Mammary epithelial cell (primary cell): ENCODE measurements at regions of chr14 and their contacts with region 1.

Region 1: DNA sequence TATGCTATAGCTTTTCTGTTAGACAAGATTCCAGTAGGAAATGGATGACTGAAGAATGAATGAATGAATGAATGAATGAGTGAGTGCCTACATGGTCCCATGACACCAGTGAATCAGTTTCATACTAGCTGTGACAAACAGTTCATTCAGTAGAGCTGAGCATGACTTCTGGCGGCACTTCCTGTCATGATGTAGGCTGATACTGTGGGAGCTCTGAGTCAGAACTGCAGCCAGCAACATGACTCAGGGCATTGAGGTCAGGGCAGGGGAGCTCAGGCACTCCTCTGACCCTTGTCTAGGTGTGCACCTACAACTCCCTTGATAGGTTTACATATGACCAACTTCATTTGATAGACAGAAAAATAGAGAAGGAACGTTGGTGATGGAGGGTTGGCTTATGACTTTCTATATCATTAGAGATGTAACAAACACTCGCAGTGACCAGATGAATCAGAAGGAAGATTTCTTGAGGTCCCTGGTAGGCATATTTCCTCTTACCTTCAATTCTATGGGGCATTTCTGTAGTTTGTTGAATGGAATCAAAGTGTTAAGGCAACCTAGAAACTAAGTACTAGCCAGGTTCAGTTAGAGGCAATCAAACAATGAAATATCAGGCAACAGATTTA is 139.3 kb upstream of the ARHGAP5 start:
- DNase-seq: peak; percentile 99
- H3K4me3 ChIP-seq: no peak overlapping the region
- H3K27ac ChIP-seq: peak overlapping the region; percentile 93
- H3K4me1 ChIP-seq: peaks cover 21% of the 10 kb centered on the region
- H3K27me3 ChIP-seq: no peaks in the 10 kb centered on the region
- CTCF ChIP-seq: no peak

Region 2: DNA sequence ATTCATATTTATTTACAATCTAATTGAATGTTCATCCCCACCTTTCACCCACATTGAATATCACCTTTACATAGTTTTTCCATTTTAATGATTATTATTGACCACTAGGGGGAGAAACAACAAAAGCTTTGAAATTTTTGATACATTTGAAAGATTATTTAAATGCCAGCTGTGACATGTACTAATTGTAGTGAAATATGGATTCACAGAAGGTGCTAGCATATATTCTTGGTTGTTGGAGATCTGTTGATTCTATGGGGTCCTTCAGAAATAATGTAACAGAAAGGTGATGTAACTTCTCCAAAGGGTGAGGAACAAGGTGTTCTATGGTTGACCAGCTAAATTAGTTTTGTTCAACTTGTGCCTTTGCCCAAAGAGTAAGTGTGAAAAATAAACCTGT is 427.6 kb before region 1 on chr14:
- CTCF ChIA-PET with region 1: no interaction called
- dilution Hi-C with region 1: no loop called
- in situ Hi-C with region 1: loop called in 1 of 2 experiments (anchors 25 kb)
- intact Hi-C with region 1: loop called (anchors 1 kb)
- DNase-seq: peak; percentile 20
- H3K4me3 ChIP-seq: no peak overlapping the region
- H3K27ac ChIP-seq: no peak overlapping the region
- H3K4me1 ChIP-seq: no peaks in the 10 kb centered on the region
- H3K27me3 ChIP-seq: no peaks in the 10 kb centered on the region
- CTCF ChIP-seq: peak; percentile 33 to 46

Region 3: DNA sequence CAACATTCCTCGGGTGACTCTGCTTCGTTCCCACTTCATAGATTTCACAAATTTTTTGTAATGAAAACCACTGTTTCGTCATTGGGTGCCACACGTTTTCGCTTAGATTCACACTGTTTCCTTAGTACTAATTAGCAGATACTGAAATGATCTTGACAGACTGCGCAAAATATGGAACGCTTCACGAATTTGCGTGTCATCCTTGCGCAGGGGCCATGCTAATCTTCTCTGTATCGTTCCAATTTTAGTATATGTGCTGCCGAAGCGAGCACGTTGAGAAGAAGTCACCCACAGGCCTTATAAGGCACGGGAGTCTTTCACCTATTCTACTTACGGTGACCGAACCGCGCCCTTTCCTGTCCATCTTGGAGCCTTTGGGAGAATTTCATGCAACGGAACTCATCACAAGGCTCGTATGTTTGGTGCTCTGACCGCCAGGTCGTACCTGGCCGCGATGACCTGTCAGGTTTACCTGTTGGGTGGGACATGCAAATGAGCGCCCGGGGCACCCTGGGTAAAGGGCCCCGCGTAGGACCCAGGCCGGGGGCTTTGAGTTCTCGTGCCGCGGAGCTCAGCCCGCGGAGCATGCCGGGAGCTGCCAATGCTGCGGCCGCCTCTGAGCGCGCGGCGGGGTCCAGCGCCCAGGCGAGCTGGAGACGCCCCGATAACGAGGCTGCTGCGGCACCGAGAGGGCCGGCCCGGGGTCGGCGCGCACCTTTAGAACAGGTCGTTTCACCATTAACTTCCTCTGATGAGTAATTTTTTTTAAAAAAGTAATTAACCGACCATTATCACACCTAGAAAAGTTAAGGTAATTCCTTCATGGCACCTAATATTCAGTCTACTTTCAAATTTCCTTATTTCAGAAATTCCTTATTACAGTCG is 265.4 kb after region 1 on chr14 and contains the start of gene RNU6-8:
- CTCF ChIA-PET with region 1: no interaction called
- dilution Hi-C with region 1: no loop called
- in situ Hi-C with region 1: no loop called
- intact Hi-C with region 1: loop called (anchors 1 kb)
- DNase-seq: peak; percentile 79
- H3K4me3 ChIP-seq: peak within 1 kb of the TSS; percentile 68 to 74 (median 74)
- H3K27ac ChIP-seq: peak within 1 kb of the TSS; percentile 91
- H3K4me1 ChIP-seq: peaks cover 38% of the 10 kb centered on the region
- H3K27me3 ChIP-seq: no peaks in the 10 kb centered on the region
- CTCF ChIP-seq: no peak
- total RNA-seq, gene RNU6-8: not detected

Region 4: DNA sequence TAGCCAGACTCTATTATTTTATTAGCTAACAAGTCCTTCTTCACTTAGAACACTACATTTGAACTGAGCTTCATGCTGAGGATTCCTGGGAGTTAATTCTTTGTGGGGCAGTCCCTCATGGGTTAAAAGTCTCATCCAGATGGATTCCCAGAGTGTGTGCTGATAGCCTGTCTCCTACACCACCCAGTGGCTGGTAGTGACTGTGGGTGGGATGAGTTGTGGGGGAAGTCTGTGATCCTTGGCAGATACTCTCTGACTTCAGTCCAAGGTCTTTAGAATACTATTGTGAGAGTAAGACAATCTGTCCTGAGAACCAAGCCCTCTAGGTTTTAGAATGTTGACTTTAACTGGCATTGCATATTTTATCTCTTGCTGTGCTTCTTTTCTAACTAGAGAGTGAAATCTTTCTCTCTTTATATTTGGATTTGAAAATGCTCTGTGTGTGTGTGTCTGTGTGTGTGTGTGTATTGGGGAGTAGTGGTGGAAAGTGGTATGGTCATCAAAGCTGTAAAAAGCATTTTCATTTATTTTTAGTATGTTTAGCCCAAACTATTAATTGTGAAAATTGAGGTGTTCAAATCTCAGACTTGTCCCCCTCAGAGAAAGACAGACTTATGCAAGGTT is 428.5 kb after region 1 on chr14:
- CTCF ChIA-PET with region 1: no interaction called
- dilution Hi-C with region 1: no loop called
- in situ Hi-C with region 1: loop called in 1 of 2 experiments (anchors 25 kb)
- intact Hi-C with region 1: no loop called
- DNase-seq: no peak
- H3K4me3 ChIP-seq: no peak overlapping the region
- H3K27ac ChIP-seq: no peak overlapping the region
- H3K4me1 ChIP-seq: peaks cover 24% of the 10 kb centered on the region
- H3K27me3 ChIP-seq: no peaks in the 10 kb centered on the region
- CTCF ChIP-seq: peak; percentile 6 to 24

Region 5: DNA sequence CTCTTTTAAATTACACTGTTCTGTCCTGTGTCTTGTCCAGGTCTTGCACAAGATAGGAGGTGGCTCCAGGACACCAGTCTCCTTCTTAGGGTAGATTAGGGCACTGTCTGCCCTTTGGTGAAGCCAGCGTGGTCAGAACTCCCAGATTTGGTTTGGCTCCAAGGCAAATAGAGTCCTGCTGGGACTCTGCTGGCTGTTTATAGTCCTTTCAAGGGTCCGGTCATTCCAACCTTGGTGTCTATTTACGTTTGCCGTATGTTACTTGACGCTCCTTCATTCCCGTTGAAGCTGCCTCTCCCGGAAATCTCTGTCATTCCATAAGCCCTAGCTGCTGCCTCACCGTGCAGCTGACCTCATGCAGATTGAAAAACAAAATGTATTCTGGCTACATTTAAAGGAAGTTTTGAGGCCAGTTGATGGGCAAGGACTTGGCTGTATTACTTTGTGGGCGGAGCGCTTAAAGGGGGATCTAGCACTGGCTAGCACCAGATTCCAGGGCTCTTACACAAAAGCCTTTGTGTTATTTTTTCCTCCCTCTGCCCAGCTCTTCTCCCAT is 571.9 kb after region 1 on chr14:
- CTCF ChIA-PET with region 1: no interaction called
- dilution Hi-C with region 1: no loop called
- in situ Hi-C with region 1: no loop called
- intact Hi-C with region 1: loop called (anchors 5 kb)
- DNase-seq: peak; percentile 93
- H3K4me3 ChIP-seq: peak overlapping the region in 1 of 3 experiments; percentile 10
- H3K27ac ChIP-seq: peak overlapping the region; percentile 87
- H3K4me1 ChIP-seq: peaks cover 41% of the 10 kb centered on the region
- H3K27me3 ChIP-seq: no peaks in the 10 kb centered on the region
- CTCF ChIP-seq: no peak

Region 6: GRCh38 chr14:32669391-32669790 is 731.6 kb after region 1 on chr14:
- CTCF ChIA-PET with region 1: no interaction called
- dilution Hi-C with region 1: no loop called
- in situ Hi-C with region 1: no loop called
- intact Hi-C with region 1: no loop called
- DNase-seq: no peak
- H3K4me3 ChIP-seq: no peak overlapping the region
- H3K27ac ChIP-seq: no peak overlapping the region
- H3K4me1 ChIP-seq: no peaks in the 10 kb centered on the region
- H3K27me3 ChIP-seq: no peaks in the 10 kb centered on the region
- CTCF ChIP-seq: no peak